IMR-90 (cell line): ENCODE measurements at regions of chr9 and their contacts with region 1.

Region 1: GRCh38 chr9:84301851-84302250 is 38.7 kb downstream of the SLC28A3 start:
- DNase-seq: peak; percentile 52
- ATAC-seq: no peak
- H3K4me3 ChIP-seq: no peak overlapping the region
- H3K27ac ChIP-seq: no peak overlapping the region
- H3K4me1 ChIP-seq: peaks cover 15% of the 10 kb centered on the region
- H3K27me3 ChIP-seq: no peaks in the 10 kb centered on the region
- CTCF ChIP-seq: no peak
- POLR2A ChIP-seq: no peak
- RAD21 ChIP-seq: no peak

Region 2: GRCh38 chr9:83965350-83966208 is 336.3 kb before region 1 on chr9:
- CTCF ChIA-PET with region 1: no interaction called
- POLR2A ChIA-PET with region 1: no interaction called
- dilution Hi-C with region 1: no loop called
- in situ Hi-C with region 1: no loop called
- intact Hi-C with region 1: loop called (anchors 5 kb)
- DNase-seq: peak; percentile 43
- ATAC-seq: peak; percentile 50
- H3K4me3 ChIP-seq: no peak overlapping the region
- H3K27ac ChIP-seq: no peak overlapping the region; the same call in 1 of the 2 replicates
- H3K4me1 ChIP-seq: peaks cover 4% of the 10 kb centered on the region; the same call in 1 of the 2 replicates
- H3K27me3 ChIP-seq: no peaks in the 10 kb centered on the region
- CTCF ChIP-seq: no peak
- POLR2A ChIP-seq: no peak
- RAD21 ChIP-seq: no peak

Region 3: DNA sequence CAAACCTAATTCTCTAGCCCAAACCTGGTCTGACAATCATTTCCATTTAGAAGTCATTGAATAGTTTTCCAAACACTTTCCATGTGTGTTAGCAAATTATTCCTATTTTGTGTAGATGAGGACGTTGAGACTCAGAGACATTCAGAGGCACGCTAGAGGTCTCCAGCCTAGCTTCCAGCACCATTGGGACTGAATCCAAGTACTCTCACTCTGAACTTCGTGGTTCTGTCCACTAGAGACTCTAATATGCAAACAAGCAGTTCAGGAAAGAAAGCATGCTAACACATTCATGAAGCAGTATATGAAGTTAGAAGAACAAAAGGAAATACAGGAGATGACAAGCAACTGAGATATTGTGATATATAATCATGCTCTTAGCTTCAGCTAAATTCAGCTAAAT is 722.5 kb after region 1 on chr9:
- CTCF ChIA-PET with region 1: no interaction called
- POLR2A ChIA-PET with region 1: no interaction called
- dilution Hi-C with region 1: no loop called
- in situ Hi-C with region 1: no loop called
- intact Hi-C with region 1: no loop called
- DNase-seq: no peak
- ATAC-seq: no peak
- H3K4me3 ChIP-seq: no peak overlapping the region
- H3K27ac ChIP-seq: no peak overlapping the region
- H3K4me1 ChIP-seq: no peaks in the 10 kb centered on the region
- H3K27me3 ChIP-seq: no peaks in the 10 kb centered on the region
- CTCF ChIP-seq: no peak
- POLR2A ChIP-seq: no peak
- RAD21 ChIP-seq: no peak